Activated naive CD4-positive, alpha-beta T cell treated with anti-CD3 and anti-CD28 coated beads for 36 hours (primary cell): ENCODE measurements at regions of chr2 and their contacts with region 1.

Region 1: DNA sequence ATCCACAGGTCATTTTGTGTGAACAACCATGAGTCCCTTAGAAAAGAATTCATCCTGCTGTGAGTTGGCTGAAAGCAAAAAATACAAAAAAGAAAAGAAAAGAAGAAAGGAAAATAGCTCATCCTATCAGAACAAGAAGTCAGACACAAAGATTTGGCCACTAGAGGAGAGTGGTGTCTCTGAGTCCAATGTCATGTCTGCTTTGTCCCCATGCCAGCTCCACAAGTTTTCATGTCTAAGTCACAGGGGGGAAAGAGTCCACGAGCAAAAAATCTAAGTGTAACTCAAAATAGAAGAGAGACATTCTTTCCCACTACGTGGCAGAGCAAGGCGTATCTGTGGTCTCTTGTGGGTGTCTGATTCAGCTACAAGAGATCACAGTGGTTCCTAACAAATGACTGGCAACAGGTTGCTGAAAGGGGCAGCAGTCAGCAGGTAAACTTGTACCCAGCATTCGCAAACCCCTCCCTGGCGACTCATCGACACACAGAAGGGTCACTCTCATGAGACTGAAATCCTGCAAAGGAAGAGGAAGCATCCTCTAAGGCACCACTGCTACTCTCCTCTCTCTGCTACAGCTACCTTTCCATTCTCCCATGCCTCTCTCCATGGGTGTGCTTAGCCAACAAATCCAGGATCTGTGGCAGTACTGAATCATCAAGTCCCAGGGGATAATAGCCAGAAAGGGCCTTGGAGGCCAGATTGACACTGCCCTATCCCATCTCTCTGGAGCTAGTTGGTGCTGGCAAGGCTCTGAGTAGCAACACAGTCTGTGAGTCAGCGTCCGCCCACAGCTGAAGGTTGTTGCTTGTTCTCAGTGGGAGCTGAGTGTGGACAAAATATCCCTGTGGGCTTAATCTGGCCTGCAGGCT is 123.0 kb upstream of the SLC39A10 start:
- DNase-seq: peak; percentile 85
- H3K4me3 Mint-ChIP-seq: peak overlapping the region; percentile 75
- H3K27ac Mint-ChIP-seq: peak overlapping the region; percentile 98
- H3K4me1 Mint-ChIP-seq: peaks cover 79% of the 10 kb centered on the region
- H3K27me3 Mint-ChIP-seq: no peaks in the 10 kb centered on the region

Region 2: DNA sequence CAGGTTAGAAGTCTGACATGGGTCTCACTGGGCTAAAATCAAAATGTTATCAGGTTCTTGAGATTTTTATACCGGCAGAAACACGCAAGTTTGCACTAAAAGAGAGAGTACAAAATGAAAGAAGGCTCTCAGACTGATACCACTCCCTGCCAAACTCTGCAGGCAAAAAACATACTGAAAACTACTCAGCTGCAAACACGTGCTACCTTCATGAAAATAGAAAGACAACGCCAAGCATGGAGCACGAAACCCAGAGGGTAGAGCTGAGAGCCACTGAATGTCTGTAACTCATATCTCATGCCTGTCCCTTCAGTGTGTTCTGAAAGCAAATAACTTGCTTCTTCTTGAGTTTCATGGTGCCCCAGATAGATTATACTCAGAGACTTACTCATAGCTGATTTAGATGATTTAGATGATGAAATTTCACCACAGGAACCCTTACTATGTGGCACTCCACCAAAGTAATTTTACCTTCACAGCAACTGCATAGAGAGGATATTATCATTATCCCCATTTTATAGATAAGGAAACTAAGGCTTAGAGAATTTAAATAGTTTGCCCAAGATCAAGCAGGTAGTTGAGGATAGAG is 190.0 kb before region 1 on chr2:
- CTCF ChIA-PET with region 1: no interaction called
- intact Hi-C with region 1: no loop called
- DNase-seq: no peak
- H3K4me3 Mint-ChIP-seq: no peak overlapping the region
- H3K27ac Mint-ChIP-seq: no peak overlapping the region
- H3K4me1 Mint-ChIP-seq: no peaks in the 10 kb centered on the region
- H3K27me3 Mint-ChIP-seq: no peaks in the 10 kb centered on the region

Region 3: GRCh38 chr2:195407782-195408181 is 126.2 kb before region 1 on chr2:
- CTCF ChIA-PET with region 1: no interaction called
- intact Hi-C with region 1: loop called (anchors 5 kb)
- DNase-seq: no peak
- H3K4me3 Mint-ChIP-seq: no peak overlapping the region
- H3K27ac Mint-ChIP-seq: no peak overlapping the region
- H3K4me1 Mint-ChIP-seq: peaks cover 18% of the 10 kb centered on the region
- H3K27me3 Mint-ChIP-seq: no peaks in the 10 kb centered on the region

Region 4: GRCh38 chr2:195486987-195487644 is 46.9 kb before region 1 on chr2:
- CTCF ChIA-PET with region 1: no interaction called
- intact Hi-C with region 1: loop called (anchors 1 kb)
- DNase-seq: peak; percentile 34
- H3K4me3 Mint-ChIP-seq: no peak overlapping the region
- H3K27ac Mint-ChIP-seq: peak overlapping the region; percentile 64
- H3K4me1 Mint-ChIP-seq: peaks cover 16% of the 10 kb centered on the region
- H3K27me3 Mint-ChIP-seq: no peaks in the 10 kb centered on the region

Region 5: GRCh38 chr2:195543902-195544894 is 10.2 kb after region 1 on chr2:
- CTCF ChIA-PET with region 1: interaction called, 5 read pairs
- intact Hi-C with region 1: loop called (anchors 1 kb)
- DNase-seq: peak; percentile 72
- H3K4me3 Mint-ChIP-seq: peak overlapping the region; percentile 40
- H3K27ac Mint-ChIP-seq: peak overlapping the region; percentile 91
- H3K4me1 Mint-ChIP-seq: peaks cover 67% of the 10 kb centered on the region
- H3K27me3 Mint-ChIP-seq: no peaks in the 10 kb centered on the region

Region 6: GRCh38 chr2:196143730-196144131 is 609.7 kb after region 1 on chr2:
- CTCF ChIA-PET with region 1: no interaction called
- intact Hi-C with region 1: loop called (anchors 5 kb)
- DNase-seq: no peak
- H3K4me3 Mint-ChIP-seq: peak overlapping the region; percentile 29
- H3K27ac Mint-ChIP-seq: peak overlapping the region; percentile 89
- H3K4me1 Mint-ChIP-seq: peaks cover 70% of the 10 kb centered on the region
- H3K27me3 Mint-ChIP-seq: no peaks in the 10 kb centered on the region

Region 7: DNA sequence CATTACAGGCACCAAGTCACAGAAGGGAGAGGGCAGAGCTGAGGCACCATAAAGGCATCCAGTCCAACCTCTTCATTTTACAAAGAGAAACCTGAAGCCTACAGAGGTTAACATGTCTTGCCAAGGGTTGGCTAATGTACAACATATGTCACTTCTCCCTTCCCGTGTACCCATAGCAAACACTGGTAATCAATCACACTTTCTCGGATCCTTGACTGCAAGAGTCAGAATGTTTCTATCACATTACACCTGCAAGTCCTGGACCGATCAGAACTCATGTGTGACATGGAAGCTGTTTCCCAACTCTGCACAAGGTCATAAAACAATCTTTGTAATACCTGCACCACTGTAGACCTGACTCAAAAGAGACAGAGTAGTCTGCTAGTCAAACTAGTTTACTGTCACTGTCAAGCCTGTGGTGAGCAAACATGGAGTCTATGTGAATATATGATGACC is 1770.6 kb after region 1 on chr2:
- CTCF ChIA-PET with region 1: no interaction called
- intact Hi-C with region 1: loop called (anchors 5 kb)
- DNase-seq: peak; percentile 68
- H3K4me3 Mint-ChIP-seq: peak overlapping the region; percentile 77
- H3K27ac Mint-ChIP-seq: peak overlapping the region; percentile 96
- H3K4me1 Mint-ChIP-seq: peaks cover 68% of the 10 kb centered on the region
- H3K27me3 Mint-ChIP-seq: no peaks in the 10 kb centered on the region